H1 (cell line): ENCODE measurements at regions of chr20 and their contacts with region 1.

Region 1: DNA sequence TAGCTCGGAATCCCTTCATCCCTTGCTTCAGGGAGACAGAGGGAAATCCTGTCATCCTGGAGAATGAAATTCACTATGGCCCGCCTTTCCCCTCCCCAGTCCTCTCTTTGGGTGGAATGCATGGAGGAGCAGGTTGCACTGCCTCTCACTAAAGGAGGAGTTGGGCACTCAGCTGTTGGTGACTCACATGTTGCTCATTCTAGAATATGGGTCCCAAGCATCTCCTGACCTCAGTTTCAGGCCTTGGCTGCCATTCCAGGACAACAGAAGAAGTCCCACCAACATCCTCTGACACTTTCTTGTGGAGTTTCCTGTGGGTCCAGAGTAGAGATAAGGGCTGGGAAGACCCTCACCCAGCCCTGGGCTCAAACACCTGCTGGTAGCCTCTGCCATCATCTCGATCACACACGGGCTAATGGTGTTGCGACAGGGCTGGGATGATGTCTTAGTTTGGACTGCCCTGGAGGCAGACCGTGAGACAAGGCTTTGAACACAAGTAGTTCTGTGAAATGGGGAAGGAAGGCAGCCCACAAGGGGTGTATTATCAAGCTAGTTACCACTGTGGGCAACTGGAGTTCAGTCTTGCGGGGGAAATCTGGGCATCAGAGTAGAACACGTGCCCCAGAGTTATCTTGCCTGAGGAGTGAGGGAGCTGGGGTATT is 52.4 kb upstream of the RNF24 start:
- DNase-seq: no peak
- H3K4me3 ChIP-seq: no peak overlapping the region
- H3K27ac ChIP-seq: no peak overlapping the region
- H3K4me1 ChIP-seq: peaks cover 0 to 13% (median 8%) of the 10 kb centered on the region in 4 experiments; a peak in 6 of 7 replicates
- H3K27me3 ChIP-seq: no peaks in the 10 kb centered on the region
- CTCF ChIP-seq: no peak
- EP300 ChIP-seq: no peak
- POLR2A ChIP-seq: no peak
- RAD21 ChIP-seq: no peak

Region 2: DNA sequence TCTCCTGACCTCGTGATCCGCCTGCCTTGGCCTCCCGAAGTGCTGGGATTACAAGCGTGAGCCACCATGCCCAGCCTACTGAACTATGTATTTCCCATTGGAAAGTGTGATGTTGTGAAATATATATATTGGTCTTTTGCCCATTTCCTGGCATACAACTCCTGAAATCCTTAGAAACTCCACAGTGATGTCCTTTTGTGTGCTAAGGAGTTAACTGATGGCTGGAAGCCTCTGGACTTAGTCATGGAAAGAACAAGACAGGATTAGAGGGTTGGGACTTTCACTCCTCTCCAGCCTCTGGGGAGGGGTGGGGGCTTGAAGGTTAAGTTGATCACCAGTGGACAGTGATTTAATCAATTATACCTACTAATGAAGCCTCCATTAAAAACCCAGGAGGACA is 171.4 kb before region 1 on chr20:
- CTCF ChIA-PET with region 1: interaction called, 10 read pairs
- POLR2A ChIA-PET with region 1: no interaction called
- DNase-seq: no peak
- H3K4me3 ChIP-seq: no peak overlapping the region
- H3K27ac ChIP-seq: no peak overlapping the region
- H3K4me1 ChIP-seq: peaks cover 0 to 2% (median 0%) of the 10 kb centered on the region in 4 experiments; a peak in 2 of 7 replicates
- H3K27me3 ChIP-seq: no peaks in the 10 kb centered on the region
- CTCF ChIP-seq: no peak
- EP300 ChIP-seq: no peak
- POLR2A ChIP-seq: no peak
- RAD21 ChIP-seq: no peak

Region 3: DNA sequence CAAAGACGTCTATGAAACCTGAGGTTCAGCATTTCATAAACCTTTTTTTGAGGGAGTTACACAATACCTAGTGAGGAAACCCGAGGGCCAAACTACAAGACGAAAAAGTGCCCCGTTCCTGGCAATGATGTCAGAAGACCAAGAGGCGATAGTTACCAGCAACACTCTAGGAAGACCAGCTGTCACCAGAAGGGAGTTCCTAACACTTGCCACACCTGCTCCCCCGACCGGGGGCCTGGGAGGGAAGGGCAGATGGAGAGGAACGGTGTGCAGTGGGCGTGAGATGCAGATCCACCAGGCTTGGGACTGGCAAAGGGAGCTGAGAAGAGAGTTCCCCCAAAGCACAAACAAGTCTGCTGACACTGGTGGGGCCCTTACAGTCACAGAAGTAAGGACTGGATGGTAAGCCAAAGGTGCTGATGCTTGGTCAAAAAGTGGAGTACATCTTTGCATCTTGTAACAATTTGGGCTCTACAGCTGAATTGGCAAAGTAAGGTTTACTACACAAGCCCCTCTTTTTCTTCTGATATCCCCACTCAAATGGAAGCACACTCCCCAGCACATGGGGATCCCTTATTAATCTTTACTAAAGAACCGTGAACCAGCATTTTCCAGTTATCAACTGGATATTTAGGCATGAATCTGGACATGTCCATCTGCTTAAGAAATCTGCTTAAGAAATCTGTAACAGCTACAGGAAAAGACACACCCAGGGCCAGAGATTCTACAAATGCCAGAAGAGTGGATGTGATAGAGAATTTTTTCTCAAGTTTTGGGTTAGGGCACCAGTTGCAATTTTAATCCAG is 140.0 kb before region 1 on chr20:
- CTCF ChIA-PET with region 1: interaction called, 42 read pairs
- POLR2A ChIA-PET with region 1: interaction called, 57 read pairs
- DNase-seq: peak in 1 of 2 experiments; percentile 61
- H3K4me3 ChIP-seq: no peak overlapping the region
- H3K27ac ChIP-seq: no peak overlapping the region
- H3K4me1 ChIP-seq: peaks cover 0 to 19% (median 2%) of the 10 kb centered on the region in 4 experiments; a peak in 3 of 7 replicates
- H3K27me3 ChIP-seq: no peaks in the 10 kb centered on the region
- CTCF ChIP-seq: no peak
- EP300 ChIP-seq: no peak
- POLR2A ChIP-seq: peak; percentile 9 to 67; a peak in 2 of 3 replicates
- RAD21 ChIP-seq: no peak

Region 4: GRCh38 chr20:4026093-4026601 is 41.6 kb before region 1 on chr20:
- CTCF ChIA-PET with region 1: interaction called, 48 read pairs
- POLR2A ChIA-PET with region 1: interaction called, 4 read pairs
- DNase-seq: peak in 1 of 2 experiments; percentile 46
- H3K4me3 ChIP-seq: no peak overlapping the region
- H3K27ac ChIP-seq: no peak overlapping the region
- H3K4me1 ChIP-seq: peaks cover 3 to 15% (median 8%) of the 10 kb centered on the region in 4 experiments; a peak in 6 of 7 replicates
- H3K27me3 ChIP-seq: no peaks in the 10 kb centered on the region; a peak in 1 of 7 replicates
- CTCF ChIP-seq: peak; percentile 27 to 69 (median 30); a peak in 3 of 4 replicates
- EP300 ChIP-seq: no peak
- POLR2A ChIP-seq: no peak
- RAD21 ChIP-seq: peak; percentile 54 to 59

Region 5: DNA sequence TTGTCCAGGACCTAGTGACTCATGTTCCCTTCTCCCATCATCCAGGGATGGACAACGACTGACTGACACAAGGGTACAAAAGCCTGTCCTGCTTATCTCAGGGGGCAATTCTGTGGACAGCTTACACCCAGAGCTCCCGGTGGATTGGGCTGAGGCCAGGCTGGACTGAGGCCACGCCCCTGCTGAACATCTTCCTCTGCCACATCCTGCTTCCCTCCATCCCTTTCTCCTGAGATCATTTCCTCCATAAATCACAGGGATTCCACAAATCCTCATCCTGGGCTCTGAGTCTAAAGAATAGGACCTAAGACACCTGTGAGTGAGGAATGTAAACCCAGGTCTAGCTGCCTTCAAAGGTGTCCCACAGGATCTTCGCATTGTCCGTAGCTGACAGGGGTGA is 22.0 kb before region 1 on chr20:
- CTCF ChIA-PET with region 1: interaction called, 34 read pairs
- POLR2A ChIA-PET with region 1: interaction called, 4 read pairs
- DNase-seq: no peak
- H3K4me3 ChIP-seq: no peak overlapping the region
- H3K27ac ChIP-seq: no peak overlapping the region
- H3K4me1 ChIP-seq: peaks cover 0 to 4% (median under 1%) of the 10 kb centered on the region in 4 experiments; a peak in 4 of 7 replicates
- H3K27me3 ChIP-seq: 0 out of 7 replicates have a peak, but pooled peaks cover 0 to 2% (median 0%) of the 10 kb centered on the region in 4 experiments
- CTCF ChIP-seq: no peak
- EP300 ChIP-seq: no peak
- POLR2A ChIP-seq: no peak
- RAD21 ChIP-seq: no peak

Region 6: DNA sequence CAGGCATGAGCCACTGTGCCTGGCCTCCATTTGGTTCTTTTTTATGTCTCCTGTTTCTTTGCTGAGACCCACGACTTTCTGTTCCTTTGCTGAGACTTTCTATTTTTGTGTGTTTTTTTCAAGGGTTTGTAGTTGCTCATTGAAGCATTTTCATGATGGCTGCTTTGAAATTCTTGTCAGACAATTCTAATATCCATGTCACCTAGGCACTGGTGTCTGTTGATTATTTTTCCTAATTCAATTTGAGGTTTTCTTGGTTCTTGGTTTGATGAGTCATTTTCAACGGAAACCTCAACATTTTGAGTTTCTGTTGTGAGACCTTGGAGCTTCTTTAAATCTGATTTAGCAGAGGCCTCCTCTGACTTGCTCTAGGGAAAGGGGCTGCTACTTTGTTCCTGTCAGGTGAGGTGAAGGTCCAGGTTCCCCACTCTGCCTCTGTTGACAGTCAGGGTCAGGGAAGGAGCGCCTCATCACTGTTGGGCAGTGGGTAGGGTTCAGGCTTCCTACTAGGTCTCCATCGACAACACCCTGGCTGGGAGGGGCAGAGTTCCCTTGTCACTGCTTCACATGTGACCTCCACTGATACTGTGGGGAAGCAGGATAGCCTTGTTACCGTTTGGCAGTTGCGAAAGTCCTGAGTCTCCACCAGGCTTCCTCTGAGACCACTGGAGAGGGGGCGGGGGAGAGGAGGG is 14.8 kb after region 1 on chr20:
- CTCF ChIA-PET with region 1: interaction called, 41 read pairs
- POLR2A ChIA-PET with region 1: no interaction called
- DNase-seq: no peak
- H3K4me3 ChIP-seq: peak overlapping the region in 2 of 4 experiments; percentile 7 to 34; a peak in 2 of 8 replicates
- H3K27ac ChIP-seq: no peak overlapping the region
- H3K4me1 ChIP-seq: peaks cover 3 to 14% (median 6%) of the 10 kb centered on the region in 4 experiments
- H3K27me3 ChIP-seq: peaks cover 0 to 6% (median 1%) of the 10 kb centered on the region in 4 experiments; a peak in 3 of 7 replicates
- CTCF ChIP-seq: no peak
- EP300 ChIP-seq: no peak
- POLR2A ChIP-seq: no peak
- RAD21 ChIP-seq: no peak